Ovary (tissue), 10 donors: ENCODE measurements at regions of chr1 and their contacts with region 1.

Region 1: DNA sequence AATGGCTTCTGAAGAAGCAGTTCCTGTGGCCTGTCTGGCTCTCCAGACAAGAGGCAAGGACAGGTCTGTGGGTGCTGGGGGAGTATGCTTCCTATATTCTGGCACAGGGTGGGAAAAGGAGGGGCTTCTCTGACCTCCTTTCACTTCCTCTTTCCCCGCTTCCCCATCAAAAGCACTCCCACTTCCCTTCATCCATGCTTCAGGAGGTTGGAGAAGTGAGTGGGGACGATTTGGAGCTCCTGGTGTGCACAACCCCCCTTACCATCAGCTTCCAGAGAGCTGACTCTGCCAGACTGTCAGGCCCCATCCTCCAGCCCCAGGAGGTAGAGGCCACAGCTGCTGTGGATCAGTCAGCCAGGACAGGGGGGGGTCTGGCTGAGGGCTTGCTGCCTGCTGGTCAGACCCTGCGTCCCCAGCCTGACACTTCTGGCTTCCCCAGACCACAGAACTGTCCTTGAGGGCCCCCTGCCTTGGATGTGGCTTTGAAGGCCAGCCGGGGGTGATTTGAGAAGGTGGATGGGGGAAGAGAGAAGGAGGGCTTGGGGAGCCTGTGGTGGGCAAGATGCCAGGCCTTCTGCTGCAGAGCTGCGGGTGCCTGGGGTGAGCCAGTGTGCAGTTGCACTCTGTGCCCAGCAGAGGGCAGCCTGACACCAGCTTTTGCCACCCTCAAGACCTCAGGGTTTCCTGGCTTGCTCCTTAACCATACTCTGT is 21.5 kb upstream of the TMEM222 start:
- DNase-seq: peak; percentile 88 to 93 (median 89)
- H3K4me3 ChIP-seq: no peak overlapping the region
- H3K27ac ChIP-seq: peak overlapping the region; percentile 13 to 41
- H3K4me1 ChIP-seq: no peaks in the 10 kb centered on the region
- H3K27me3 ChIP-seq: no peaks in the 10 kb centered on the region
- CTCF ChIP-seq: peak; percentile 97 to 99 (median 98)
- EP300 ChIP-seq: no peak
- POLR2A ChIP-seq: peak; percentile 23

Region 2: GRCh38 chr1:27357281-27358037 is 57.0 kb after region 1 on chr1:
- intact Hi-C with region 1: loop called in 1 of 4 experiments (anchors 10 kb)
- DNase-seq: peak; percentile 65 to 83 (median 78)
- H3K4me3 ChIP-seq: no peak overlapping the region
- H3K27ac ChIP-seq: no peak overlapping the region
- H3K4me1 ChIP-seq: peaks cover 3% of the 10 kb centered on the region
- H3K27me3 ChIP-seq: no peaks in the 10 kb centered on the region
- CTCF ChIP-seq: peak; percentile 91 to 99 (median 95)
- EP300 ChIP-seq: no peak
- POLR2A ChIP-seq: no peak